ENCODE measurements at regions of chr2 and their contacts with region 1.

Region 1: DNA sequence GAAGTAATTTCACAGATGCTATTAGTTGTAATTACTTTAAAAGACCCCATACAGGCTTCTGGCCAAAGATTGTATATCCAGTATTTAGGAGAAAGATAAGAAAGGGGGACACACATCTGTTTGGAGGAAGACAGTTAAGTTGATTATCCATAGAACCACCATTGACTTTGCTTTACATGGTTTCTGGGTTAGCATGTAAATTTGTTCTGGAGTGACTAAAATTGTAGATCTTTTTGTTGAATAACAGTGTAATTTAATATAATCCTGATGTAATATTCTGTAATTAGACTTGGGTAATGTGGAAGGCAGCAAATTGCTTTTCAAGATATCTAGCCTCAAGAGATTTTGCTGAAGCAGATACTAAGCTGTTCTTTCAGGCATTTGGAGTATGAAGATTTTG is 17.2 kb downstream of the COMMD1 start:
- DNase-seq: no peak
- ATAC-seq: no peak
- H3K4me3 ChIP-seq: no peak overlapping the region
- H3K27ac ChIP-seq: no peak overlapping the region
- H3K4me1 ChIP-seq: no peaks in the 10 kb centered on the region
- H3K27me3 ChIP-seq: no peaks in the 10 kb centered on the region
- CTCF ChIP-seq: no peak
- EP300 ChIP-seq: no peak
- POLR2A ChIP-seq: no peak
- RAD21 ChIP-seq: no peak

Region 2: DNA sequence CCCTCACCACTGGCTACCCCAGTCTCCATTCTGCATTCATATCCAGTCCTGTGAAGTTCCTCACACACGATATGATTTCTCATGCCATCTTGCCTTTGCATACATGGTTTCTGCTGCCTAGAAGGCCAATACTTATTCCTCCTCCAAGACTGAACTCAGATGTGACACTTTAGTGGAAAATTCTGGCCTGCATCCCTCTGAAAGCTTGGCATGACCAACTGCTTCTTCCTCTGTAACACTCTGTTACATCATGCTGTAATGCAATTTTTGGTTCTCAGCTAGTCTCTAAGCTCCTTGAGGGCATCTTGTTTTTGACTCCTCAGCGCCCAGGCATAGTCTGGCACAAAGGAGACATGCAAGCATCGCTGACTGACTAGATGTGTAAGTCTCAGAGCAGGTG is 81.4 kb before region 1 on chr2:
- CTCF ChIA-PET with region 1: no interaction called
- POLR2A ChIA-PET with region 1: no interaction called
- in situ Hi-C with region 1: no loop called
- intact Hi-C with region 1: no loop called
- DNase-seq: no peak
- ATAC-seq: no peak
- H3K4me3 ChIP-seq: no peak overlapping the region
- H3K27ac ChIP-seq: no peak overlapping the region
- H3K4me1 ChIP-seq: no peaks in the 10 kb centered on the region
- H3K27me3 ChIP-seq: no peaks in the 10 kb centered on the region
- CTCF ChIP-seq: no peak
- EP300 ChIP-seq: no peak
- POLR2A ChIP-seq: no peak
- RAD21 ChIP-seq: no peak

Region 3: DNA sequence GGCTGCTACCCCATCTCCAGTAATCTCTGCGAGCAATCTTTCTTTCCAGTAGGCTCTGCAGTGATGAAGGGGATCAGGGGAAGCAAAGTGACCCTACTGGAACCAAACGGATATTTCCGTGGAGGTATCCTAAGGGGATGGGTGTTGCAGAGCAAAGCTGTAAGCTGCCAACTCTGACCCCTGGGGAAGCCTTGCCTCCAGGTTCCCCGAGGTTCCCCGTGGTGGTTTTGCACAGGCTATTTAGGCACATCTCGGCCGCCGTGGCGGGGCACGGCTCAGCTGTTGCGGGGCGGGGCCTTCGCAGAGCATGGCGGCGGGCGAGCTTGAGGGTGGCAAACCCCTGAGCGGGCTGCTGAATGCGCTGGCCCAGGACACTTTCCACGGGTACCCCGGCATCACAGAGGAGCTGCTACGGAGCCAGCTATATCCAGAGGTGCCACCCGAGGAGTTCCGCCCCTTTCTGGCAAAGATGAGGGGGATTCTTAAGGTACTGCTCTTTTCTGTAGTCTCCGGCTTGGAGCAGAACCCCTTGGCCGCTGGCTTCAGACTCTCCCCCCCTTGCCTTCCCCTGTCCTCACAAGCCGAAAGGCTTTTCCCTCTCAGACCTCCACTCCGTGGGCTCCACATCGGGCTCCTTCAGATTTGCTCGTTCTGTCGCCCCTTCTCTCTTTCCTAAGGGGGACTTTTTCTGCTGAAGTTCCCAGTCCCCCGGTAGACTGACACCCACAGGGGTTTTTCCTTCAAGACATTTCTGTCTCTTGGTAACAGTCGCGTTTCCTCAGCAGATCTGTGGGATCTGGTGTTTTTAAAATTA is 17.1 kb before region 1 on chr2 and contains the start of gene COMMD1:
- CTCF ChIA-PET with region 1: no interaction called
- POLR2A ChIA-PET with region 1: no interaction called
- in situ Hi-C with region 1: no loop called
- intact Hi-C with region 1: no loop called
- DNase-seq: peak; percentile 67
- ATAC-seq: peak; percentile 99
- H3K4me3 ChIP-seq: peak within 1 kb of the TSS; percentile 83 to 97 (median 90)
- H3K27ac ChIP-seq: no peak within 1 kb of the TSS
- H3K4me1 ChIP-seq: peaks cover 18% of the 10 kb centered on the region
- H3K27me3 ChIP-seq: no peaks in the 10 kb centered on the region
- CTCF ChIP-seq: peak; percentile 36; the same call in 1 of the 2 replicates
- EP300 ChIP-seq: 0 out of 4 replicates have a peak, but pooled peaks have one; percentile 9 to 21
- POLR2A ChIP-seq: peak; percentile 79 to 93
- RAD21 ChIP-seq: no peak; the same call in 1 of the 2 replicates
- total RNA-seq, gene COMMD1: 105 and 125 TPM in 2 replicates

Region 4: GRCh38 chr2:62293490-62294271 is 371.0 kb after region 1 on chr2:
- CTCF ChIA-PET with region 1: interaction called, 4 read pairs
- POLR2A ChIA-PET with region 1: no interaction called
- in situ Hi-C with region 1: no loop called
- intact Hi-C with region 1: loop called (anchors 1 kb)
- DNase-seq: peak; percentile 51
- ATAC-seq: peak; percentile 87
- H3K4me3 ChIP-seq: peak overlapping the region; percentile 50 to 78 (median 59)
- H3K27ac ChIP-seq: no peak overlapping the region
- H3K4me1 ChIP-seq: peaks cover 29% of the 10 kb centered on the region
- H3K27me3 ChIP-seq: no peaks in the 10 kb centered on the region; a peak in 1 of 5 replicates
- CTCF ChIP-seq: peak; percentile 6; the same call in 1 of the 2 replicates
- EP300 ChIP-seq: no peak
- POLR2A ChIP-seq: 0 out of 4 replicates have a peak, but pooled peaks of 1 of the 2 experiments have one; percentile 16
- RAD21 ChIP-seq: 0 out of 2 replicates have a peak, but pooled peaks have one; percentile 21

Measured in HepG2 (cell line).